ENCODE measurements at regions of chr17 and their contacts with region 1.

Region 1: DNA sequence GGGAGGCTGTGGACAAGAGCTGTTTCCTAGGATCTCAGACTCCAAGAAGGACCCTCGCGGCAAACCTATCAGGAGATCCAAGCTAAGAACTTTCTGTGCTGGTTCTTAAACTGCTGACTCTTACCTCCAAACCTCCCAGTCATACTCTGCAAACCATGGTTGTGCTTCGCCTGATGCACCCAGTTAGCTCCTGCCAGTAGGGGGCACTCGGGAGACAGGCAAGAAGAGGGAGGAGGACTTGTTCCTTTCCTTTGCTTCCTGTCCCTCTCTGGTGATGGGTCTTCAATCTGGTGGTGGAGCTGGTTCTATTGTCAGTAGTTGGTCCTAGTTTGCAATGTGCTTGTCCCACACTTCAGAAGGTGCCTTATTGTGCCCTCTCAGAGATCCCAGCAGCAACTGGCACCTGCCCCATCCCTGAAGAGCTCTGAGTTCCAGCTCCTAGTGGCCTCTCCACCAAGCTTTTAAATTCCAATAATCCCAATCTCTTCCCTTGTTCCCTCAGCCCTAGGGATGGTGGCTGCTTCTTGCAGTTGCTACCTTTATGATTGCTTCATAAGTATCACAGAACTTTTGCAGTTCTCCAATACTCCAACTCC is 113.5 kb upstream of the RPL38 start:
- DNase-seq: peak; percentile 28
- H3K4me3 Mint-ChIP-seq: no peak overlapping the region
- H3K27ac Mint-ChIP-seq: no peak overlapping the region
- H3K4me1 Mint-ChIP-seq: no peaks in the 10 kb centered on the region
- H3K27me3 Mint-ChIP-seq: peaks cover 3% of the 10 kb centered on the region

Region 2: DNA sequence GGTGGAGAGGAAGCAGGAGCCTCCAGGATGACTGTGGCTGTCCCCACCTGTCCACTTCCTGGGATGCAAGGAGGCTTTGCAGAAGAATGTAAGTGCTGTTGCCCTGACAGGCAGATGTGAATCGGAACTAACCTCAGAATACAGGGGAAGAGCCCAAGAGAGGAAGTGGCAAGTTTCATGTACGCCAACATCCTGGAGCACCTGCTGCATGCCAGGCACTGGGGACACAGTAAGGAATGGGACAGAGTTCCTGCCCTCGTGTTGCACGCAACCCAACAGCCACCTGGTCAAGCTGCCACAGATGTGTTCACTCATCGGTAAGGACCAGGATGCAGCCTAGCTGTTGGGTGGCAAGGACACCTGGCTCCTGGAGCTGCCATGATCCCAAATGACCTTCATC is 15.0 kb after region 1 on chr17:
- intact Hi-C with region 1: no loop called
- DNase-seq: no peak
- H3K4me3 Mint-ChIP-seq: no peak overlapping the region
- H3K27ac Mint-ChIP-seq: no peak overlapping the region
- H3K4me1 Mint-ChIP-seq: no peaks in the 10 kb centered on the region
- H3K27me3 Mint-ChIP-seq: peaks cover 2% of the 10 kb centered on the region

Region 3: GRCh38 chr17:74203439-74204240 is 113.7 kb after region 1 on chr17 and contains the start of gene RPL38:
- intact Hi-C with region 1: loop called (anchors 1 kb)
- DNase-seq: peak; percentile 91
- H3K4me3 Mint-ChIP-seq: peak within 1 kb of the TSS; percentile 99
- H3K27ac Mint-ChIP-seq: peak within 1 kb of the TSS; percentile 99
- H3K4me1 Mint-ChIP-seq: peaks cover 35% of the 10 kb centered on the region
- H3K27me3 Mint-ChIP-seq: peaks cover 23% of the 10 kb centered on the region
- total RNA-seq, gene RPL38: 1,123 and 1,161 TPM in 2 replicates

Measured in activated T-helper 1 cell treated with anti-CD3 and anti-CD28 coated beads, Interleukin-12 subunit alpha, Interleukin-12 subunit beta, Interleukin-2, Interleukin-4 antibody, amounts not matched to agents 30 ng/mL and 10 ng/mL and 1 ng/mL, durations not matched to agents 14 hours and 24 hours and 36 hours (primary cell).